ENCODE measurements at regions of chr9 and their contacts with region 1.

Region 1: DNA sequence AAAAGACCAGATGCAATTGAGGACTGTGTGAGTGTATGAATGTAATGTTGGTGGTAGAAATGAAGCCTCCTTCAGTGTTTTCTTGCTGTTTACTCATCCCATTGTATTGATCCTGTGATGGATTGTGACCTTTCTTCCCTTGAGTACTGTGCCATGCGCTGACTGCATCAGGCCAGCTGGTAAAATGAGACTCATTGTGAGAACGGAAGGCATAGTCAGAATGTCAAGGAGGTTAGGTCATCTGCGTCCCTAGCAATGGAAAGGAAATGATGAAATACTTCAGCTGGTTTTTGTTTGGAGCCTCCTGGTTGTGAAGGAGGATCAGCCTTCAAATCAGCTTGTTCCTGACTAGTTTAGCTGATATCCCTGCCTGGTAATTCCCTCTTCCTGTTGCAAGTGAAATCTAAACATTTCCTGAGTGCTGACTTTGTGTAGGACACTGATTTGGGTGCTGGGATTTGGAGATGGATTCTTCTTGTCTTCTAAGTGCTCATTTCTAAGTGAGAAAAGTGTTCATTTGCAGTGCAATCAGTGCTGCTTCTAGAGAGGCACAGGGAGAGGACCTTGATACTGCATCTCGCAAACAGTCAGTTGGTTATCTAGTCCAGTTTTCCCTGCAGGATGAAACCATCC is 35.5 kb downstream of the TNFSF8 start:
- DNase-seq: peak; percentile 83
- H3K4me3 Mint-ChIP-seq: peak overlapping the region; percentile 32
- H3K27ac Mint-ChIP-seq: peak overlapping the region; percentile 89
- H3K4me1 Mint-ChIP-seq: peaks cover 48% of the 10 kb centered on the region
- H3K27me3 Mint-ChIP-seq: no peaks in the 10 kb centered on the region

Region 2: DNA sequence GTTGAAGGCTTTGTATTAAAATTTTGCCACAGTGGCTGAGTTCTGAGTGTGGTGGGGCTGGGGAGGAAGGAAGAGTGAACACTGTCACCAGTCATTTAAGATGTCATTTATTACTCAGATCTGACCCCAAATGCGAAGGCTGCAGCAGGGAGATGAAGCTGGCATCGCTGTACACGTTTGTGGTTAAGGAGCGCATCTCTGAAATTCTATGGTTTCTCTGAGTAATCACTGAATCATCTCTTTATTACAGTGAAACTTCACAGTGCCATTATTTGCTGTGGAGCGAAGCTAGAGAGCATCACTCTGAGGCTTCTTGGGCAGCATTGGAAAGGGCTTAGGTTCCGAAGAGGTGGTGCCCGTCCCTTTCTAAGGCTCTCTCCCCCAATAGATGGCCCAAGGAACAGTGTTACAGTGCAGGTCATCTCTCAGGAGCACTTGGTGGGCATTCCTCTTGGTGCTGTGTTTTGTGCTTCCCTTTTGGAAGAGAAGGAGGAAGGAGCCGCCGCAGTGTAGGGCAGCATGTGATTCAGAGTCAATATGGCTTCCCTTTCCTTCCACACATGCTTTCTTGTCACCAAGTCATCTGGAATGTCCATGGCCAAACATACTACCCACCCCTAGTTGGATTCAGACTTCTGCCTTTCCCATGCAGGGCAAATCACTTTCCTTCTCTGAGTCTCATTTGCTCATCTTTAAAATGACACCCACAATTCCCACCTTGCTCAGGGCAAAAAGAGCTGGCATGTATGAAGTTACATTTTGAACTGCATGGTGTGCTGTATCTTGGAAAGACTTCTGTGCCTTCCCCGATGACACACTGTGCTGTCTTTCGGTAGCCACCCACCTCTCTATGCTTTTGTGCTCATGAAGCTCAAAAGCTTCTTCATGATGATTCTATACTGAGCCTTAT is 203.6 kb before region 1 on chr9:
- intact Hi-C with region 1: loop called (anchors 1 kb)
- DNase-seq: peak; percentile 93
- H3K4me3 Mint-ChIP-seq: peak overlapping the region; percentile 59
- H3K27ac Mint-ChIP-seq: peak overlapping the region; percentile 97
- H3K4me1 Mint-ChIP-seq: peaks cover 80% of the 10 kb centered on the region
- H3K27me3 Mint-ChIP-seq: no peaks in the 10 kb centered on the region

Region 3: DNA sequence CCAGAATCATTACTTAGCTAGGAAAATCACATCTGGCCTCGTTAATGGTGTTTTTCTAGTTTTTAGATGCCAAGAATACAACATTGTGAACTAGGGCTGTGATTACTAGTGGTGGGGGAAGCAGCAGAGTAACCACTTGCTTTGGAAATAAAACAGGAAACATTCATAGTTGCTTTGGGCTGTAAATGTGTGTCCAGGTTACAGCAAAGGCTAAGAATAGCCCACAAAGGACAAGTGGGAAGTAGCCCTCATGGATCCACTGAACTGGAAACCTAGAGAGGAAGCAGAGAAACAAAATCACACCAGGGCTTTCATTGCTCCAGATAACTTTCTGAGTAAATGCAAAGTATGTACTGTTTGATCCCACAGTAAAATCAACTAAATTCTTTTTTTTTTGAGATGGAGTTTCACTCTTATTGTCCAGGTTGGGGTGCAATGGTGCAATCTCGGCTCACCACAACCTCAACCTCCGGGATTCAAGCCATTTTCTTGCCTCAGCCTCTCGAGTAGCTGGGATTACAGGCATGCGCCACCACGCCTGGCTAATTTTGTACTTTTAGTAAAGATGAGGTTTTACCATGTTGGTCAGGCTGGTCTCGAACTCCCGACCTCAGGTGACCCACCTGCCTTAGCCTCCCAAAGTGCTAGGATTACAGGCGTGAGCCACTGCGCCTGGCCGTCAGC is 32.9 kb before region 1 on chr9:
- intact Hi-C with region 1: loop called (anchors 2 kb)
- DNase-seq: no peak
- H3K4me3 Mint-ChIP-seq: no peak overlapping the region
- H3K27ac Mint-ChIP-seq: no peak overlapping the region
- H3K4me1 Mint-ChIP-seq: peaks cover 13% of the 10 kb centered on the region
- H3K27me3 Mint-ChIP-seq: peaks cover 12% of the 10 kb centered on the region

Measured in activated CD4-positive, alpha-beta T cell treated with anti-CD3 and anti-CD28 coated beads, Interleukin-2, amount 10 ng/mL, durations not matched to agents 24 days and 14 days (primary cell).